Calu3 (cell line): ENCODE measurements at regions of chr3 and their contacts with region 1.

Region 1: GRCh38 chr3:156674046-156674910 is at the start of gene TIPARP:
- DNase-seq: peak; percentile 100
- H3K4me3 Mint-ChIP-seq: peak within 1 kb of the TSS; percentile 99
- H3K27ac Mint-ChIP-seq: peak within 1 kb of the TSS; percentile 99
- H3K4me1 Mint-ChIP-seq: peaks cover 46% of the 10 kb centered on the region
- H3K27me3 Mint-ChIP-seq: no peaks in the 10 kb centered on the region
- CTCF ChIP-seq: peak; percentile 89
- total RNA-seq, gene TIPARP: 84.9 and 91.4 TPM in 2 replicates

Region 2: GRCh38 chr3:156535162-156535627 is 139.1 kb before region 1 on chr3:
- CTCF ChIA-PET with region 1: interaction called, 22 read pairs
- intact Hi-C with region 1: loop called (anchors 5 kb)
- DNase-seq: peak; percentile 76
- H3K4me3 Mint-ChIP-seq: peak overlapping the region; percentile 3
- H3K27ac Mint-ChIP-seq: peak overlapping the region; percentile 35
- H3K4me1 Mint-ChIP-seq: peaks cover 22% of the 10 kb centered on the region
- H3K27me3 Mint-ChIP-seq: no peaks in the 10 kb centered on the region
- CTCF ChIP-seq: no peak

Region 3: GRCh38 chr3:156630081-156630772 is 44.1 kb before region 1 on chr3:
- CTCF ChIA-PET with region 1: interaction called, 9 read pairs
- intact Hi-C with region 1: loop called (anchors 2 kb)
- DNase-seq: peak; percentile 45
- H3K4me3 Mint-ChIP-seq: no peak overlapping the region
- H3K27ac Mint-ChIP-seq: no peak overlapping the region
- H3K4me1 Mint-ChIP-seq: peaks cover 57% of the 10 kb centered on the region
- H3K27me3 Mint-ChIP-seq: no peaks in the 10 kb centered on the region
- CTCF ChIP-seq: no peak

Region 4: GRCh38 chr3:156816800-156817645 is 142.7 kb after region 1 on chr3:
- CTCF ChIA-PET with region 1: interaction called, 4 read pairs
- intact Hi-C with region 1: loop called (anchors 2 kb)
- DNase-seq: peak; percentile 99
- H3K4me3 Mint-ChIP-seq: peak overlapping the region; percentile 94
- H3K27ac Mint-ChIP-seq: peak overlapping the region; percentile 96
- H3K4me1 Mint-ChIP-seq: peaks cover 64% of the 10 kb centered on the region
- H3K27me3 Mint-ChIP-seq: no peaks in the 10 kb centered on the region
- CTCF ChIP-seq: no peak

Region 5: GRCh38 chr3:157136647-157137387 is 462.5 kb after region 1 on chr3:
- CTCF ChIA-PET with region 1: interaction called, 7 read pairs
- intact Hi-C with region 1: loop called (anchors 2 kb)
- DNase-seq: peak; percentile 48
- H3K4me3 Mint-ChIP-seq: peak overlapping the region; percentile 49
- H3K27ac Mint-ChIP-seq: peak overlapping the region; percentile 56
- H3K4me1 Mint-ChIP-seq: peaks cover 52% of the 10 kb centered on the region
- H3K27me3 Mint-ChIP-seq: no peaks in the 10 kb centered on the region
- CTCF ChIP-seq: no peak